Activated CD8-positive, alpha-beta memory T cell treated with anti-CD3 and anti-CD28 coated beads, Interleukin-2, amount 10 ng/mL, durations not matched to agents 7 days and 5 days (primary cell): ENCODE measurements at regions of chr22 and their contacts with region 1.

Region 1: GRCh38 chr22:46296257-46297150 is at the start of gene GTSE1:
- DNase-seq: peak; percentile 99
- ATAC-seq: peak; percentile 98
- H3K4me3 Mint-ChIP-seq: peak within 1 kb of the TSS; percentile 95
- H3K27ac Mint-ChIP-seq: peak within 1 kb of the TSS; percentile 97
- H3K4me1 Mint-ChIP-seq: peaks cover 70% of the 10 kb centered on the region
- H3K27me3 Mint-ChIP-seq: no peaks in the 10 kb centered on the region
- total RNA-seq, gene GTSE1: 91.9 to 101 TPM

Region 2: GRCh38 chr22:46250035-46250782 is 46.3 kb before region 1 on chr22 and contains the start of gene CDPF1:
- CTCF ChIA-PET with region 1: interaction called, 10 read pairs
- DNase-seq: peak; percentile 90
- ATAC-seq: peak; percentile 93
- H3K4me3 Mint-ChIP-seq: peak within 1 kb of the TSS; percentile 70
- H3K27ac Mint-ChIP-seq: peak within 1 kb of the TSS; percentile 80
- H3K4me1 Mint-ChIP-seq: peaks cover 36% of the 10 kb centered on the region
- H3K27me3 Mint-ChIP-seq: peaks cover 2% of the 10 kb centered on the region
- total RNA-seq, gene CDPF1: 11.0 to 11.1 TPM

Region 3: DNA sequence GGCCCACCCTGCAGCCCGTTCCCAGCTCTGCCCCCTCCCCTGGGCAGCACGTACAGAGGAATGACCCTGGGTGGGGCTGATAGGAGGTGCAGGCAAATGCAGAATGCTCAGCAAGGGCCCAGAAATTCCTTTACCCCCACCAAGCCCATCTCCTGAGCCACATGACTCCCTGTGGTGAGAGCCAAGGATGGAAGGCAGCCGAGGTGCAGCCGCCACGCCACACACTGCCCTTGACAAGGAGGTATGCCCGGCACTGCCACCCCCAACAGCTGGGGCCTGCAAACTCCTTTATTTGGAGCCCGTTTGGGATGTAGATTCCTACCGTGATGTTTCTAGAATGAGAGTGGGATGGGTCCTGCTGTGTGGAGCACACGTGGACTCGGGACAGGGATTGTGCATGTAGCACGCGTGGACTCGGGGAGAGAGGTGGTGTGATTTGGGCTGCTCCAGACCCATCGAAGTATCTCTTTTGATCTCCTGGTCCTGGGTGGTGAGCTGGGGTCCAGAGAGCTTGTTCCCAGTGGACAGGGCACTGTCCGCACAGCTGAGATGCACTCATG is 13.1 kb after region 1 on chr22:
- CTCF ChIA-PET with region 1: no interaction called
- DNase-seq: no peak
- ATAC-seq: no peak
- H3K4me3 Mint-ChIP-seq: no peak overlapping the region
- H3K27ac Mint-ChIP-seq: no peak overlapping the region
- H3K4me1 Mint-ChIP-seq: peaks cover 11% of the 10 kb centered on the region
- H3K27me3 Mint-ChIP-seq: no peaks in the 10 kb centered on the region